Heart right ventricle (tissue), 16 donors: ENCODE measurements at regions of chr9 and their contacts with region 1.

Region 1: GRCh38 chr9:106025453-106025852 is 331.1 kb downstream of the TMEM38B start:
- DNase-seq: peak; percentile 36 to 48
- ATAC-seq: peak in 7 of 8 donors; percentile 47 to 98 (median 96)
- H3K4me3 ChIP-seq: no peak overlapping the region
- H3K27ac ChIP-seq: peak overlapping the region in 2 of 10 donors; percentile 10 to 35
- H3K4me1 ChIP-seq: peaks cover 0 to 14% (median 0%) of the 10 kb centered on the region in 9 donors
- H3K27me3 ChIP-seq: no peaks in the 10 kb centered on the region
- CTCF ChIP-seq: peak in 8 of 9 donors; percentile 8 to 46 (median 29)

Region 2: GRCh38 chr9:106675745-106676144 is 650.3 kb after region 1 on chr9:
- intact Hi-C with region 1: loop called in 1 of 10 experiments (anchors 10 kb)
- DNase-seq: peak; percentile 14 to 61
- ATAC-seq: peak; percentile 75 to 99 (median 96)
- H3K4me3 ChIP-seq: no peak overlapping the region
- H3K27ac ChIP-seq: peak overlapping the region in 9 of 10 donors; percentile 19 to 74 (median 60)
- H3K4me1 ChIP-seq: peaks cover 0 to 6% (median 0%) of the 10 kb centered on the region in 9 donors
- H3K27me3 ChIP-seq: no peaks in the 10 kb centered on the region
- CTCF ChIP-seq: no peak